Motor neuron (in vitro differentiated cells): ENCODE measurements at regions of chr18 and their contacts with region 1.

Region 1: GRCh38 chr18:68177807-68178702 is 536.9 kb downstream of the TMX3 start:
- ATAC-seq: peak in 1 of 8 experiments; percentile 37
- H3K4me3 ChIP-seq: no peak overlapping the region
- H3K27ac ChIP-seq: no peak overlapping the region
- H3K4me1 ChIP-seq: no peaks in the 10 kb centered on the region

Region 2: GRCh38 chr18:68275616-68276015 is 97.6 kb after region 1 on chr18:
- in situ Hi-C with region 1: loop called in 1 of 9 experiments (anchors 25 kb)
- ATAC-seq: peak in 4 of 8 experiments; percentile 29 to 100 (median 84)
- H3K4me3 ChIP-seq: no peak overlapping the region
- H3K27ac ChIP-seq: no peak overlapping the region
- H3K4me1 ChIP-seq: peaks cover 0 to 14% of the 10 kb centered on the region in 2 donors

Region 3: GRCh38 chr18:68449292-68449691 is 271.2 kb after region 1 on chr18:
- in situ Hi-C with region 1: no loop called
- ATAC-seq: peak in 2 of 8 experiments; percentile 53 to 65
- H3K4me3 ChIP-seq: no peak overlapping the region
- H3K27ac ChIP-seq: no peak overlapping the region
- H3K4me1 ChIP-seq: no peaks in the 10 kb centered on the region

Region 4: GRCh38 chr18:69085951-69086350 is 907.9 kb after region 1 on chr18:
- in situ Hi-C with region 1: no loop called
- ATAC-seq: peak in 1 of 8 experiments; percentile 92
- H3K4me3 ChIP-seq: no peak overlapping the region
- H3K27ac ChIP-seq: no peak overlapping the region
- H3K4me1 ChIP-seq: no peaks in the 10 kb centered on the region